PC-3 (cell line): ENCODE measurements at regions of chr12 and their contacts with region 1.

Region 1: GRCh38 chr12:122895705-122896636 is at the start of gene VPS37B:
- DNase-seq: peak; percentile 82
- ATAC-seq: peak; percentile 2
- H3K4me3 ChIP-seq: peak within 1 kb of the TSS; percentile 89
- H3K27ac ChIP-seq: peak within 1 kb of the TSS; percentile 90
- H3K4me1 ChIP-seq: peaks cover 69% of the 10 kb centered on the region
- H3K27me3 ChIP-seq: no peaks in the 10 kb centered on the region
- CTCF ChIP-seq: no peak
- total RNA-seq, gene VPS37B: 74.3 and 80.8 TPM in 2 replicates

Region 2: DNA sequence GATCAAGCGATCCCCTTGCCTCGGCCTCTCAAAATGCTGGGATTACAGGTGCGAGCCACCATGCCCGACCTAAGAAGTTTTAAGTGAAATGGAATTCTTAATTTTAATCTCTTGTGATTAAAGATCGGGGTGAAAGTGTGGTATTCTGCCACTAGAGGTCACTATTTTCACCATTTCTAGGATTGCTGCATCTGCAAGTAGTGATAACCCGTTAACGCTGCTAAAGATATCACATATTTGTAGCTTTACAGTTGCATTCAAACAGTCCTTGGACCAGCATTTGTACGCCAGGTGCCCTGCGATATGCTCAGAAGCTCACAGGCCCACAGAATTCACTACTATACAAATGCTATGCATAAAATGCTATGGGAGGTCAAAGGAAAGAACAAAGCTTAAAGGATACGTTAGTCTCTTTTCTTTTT is 102.3 kb before region 1 on chr12:
- CTCF ChIA-PET with region 1: no interaction called
- POLR2A ChIA-PET with region 1: no interaction called
- intact Hi-C with region 1: no loop called
- DNase-seq: peak; percentile 76
- ATAC-seq: peak; percentile 86
- H3K4me3 ChIP-seq: no peak overlapping the region
- H3K27ac ChIP-seq: no peak overlapping the region
- H3K4me1 ChIP-seq: peaks cover under 1% of the 10 kb centered on the region; the same call in 1 of the 2 replicates
- H3K27me3 ChIP-seq: no peaks in the 10 kb centered on the region
- CTCF ChIP-seq: peak; percentile 88

Region 3: GRCh38 chr12:122860346-122861090 is 35.5 kb before region 1 on chr12:
- CTCF ChIA-PET with region 1: interaction called, 4 read pairs
- POLR2A ChIA-PET with region 1: no interaction called
- intact Hi-C with region 1: loop called (anchors 5 kb)
- DNase-seq: peak; percentile 88
- ATAC-seq: peak; percentile 78
- H3K4me3 ChIP-seq: no peak overlapping the region
- H3K27ac ChIP-seq: no peak overlapping the region
- H3K4me1 ChIP-seq: no peaks in the 10 kb centered on the region
- H3K27me3 ChIP-seq: no peaks in the 10 kb centered on the region
- CTCF ChIP-seq: peak; percentile 95

Region 4: GRCh38 chr12:122946690-122947341 is 50.8 kb after region 1 on chr12:
- CTCF ChIA-PET with region 1: interaction called, 9 read pairs
- POLR2A ChIA-PET with region 1: interaction called, 7 read pairs
- intact Hi-C with region 1: loop called (anchors 2 kb)
- DNase-seq: peak; percentile 99
- ATAC-seq: peak; percentile 84
- H3K4me3 ChIP-seq: no peak overlapping the region
- H3K27ac ChIP-seq: peak overlapping the region; percentile 94
- H3K4me1 ChIP-seq: peaks cover 65% of the 10 kb centered on the region
- H3K27me3 ChIP-seq: no peaks in the 10 kb centered on the region
- CTCF ChIP-seq: peak; percentile 71

Region 5: GRCh38 chr12:123550700-123551099 is 654.7 kb after region 1 on chr12:
- CTCF ChIA-PET with region 1: no interaction called
- POLR2A ChIA-PET with region 1: no interaction called
- intact Hi-C with region 1: no loop called
- DNase-seq: no peak
- ATAC-seq: no peak
- H3K4me3 ChIP-seq: no peak overlapping the region
- H3K27ac ChIP-seq: no peak overlapping the region
- H3K4me1 ChIP-seq: no peaks in the 10 kb centered on the region
- H3K27me3 ChIP-seq: peaks cover 5% of the 10 kb centered on the region; the same call in 1 of the 2 replicates
- CTCF ChIP-seq: no peak

Region 6: GRCh38 chr12:123580772-123581171 is 684.8 kb after region 1 on chr12:
- CTCF ChIA-PET with region 1: no interaction called
- POLR2A ChIA-PET with region 1: no interaction called
- intact Hi-C with region 1: no loop called
- DNase-seq: peak; percentile 31
- ATAC-seq: peak; percentile 21
- H3K4me3 ChIP-seq: no peak overlapping the region
- H3K27ac ChIP-seq: no peak overlapping the region
- H3K4me1 ChIP-seq: peaks cover 16% of the 10 kb centered on the region
- H3K27me3 ChIP-seq: no peaks in the 10 kb centered on the region
- CTCF ChIP-seq: no peak